Motor neuron (in vitro differentiated cells): ENCODE measurements at regions of chr13 and their contacts with region 1.

Region 1: GRCh38 chr13:20182231-20182846 is 10.4 kb downstream of the GJB2 start:
- ATAC-seq: peak; percentile 75 to 97 (median 92)
- H3K4me3 ChIP-seq: no peak overlapping the region
- H3K27ac ChIP-seq: no peak overlapping the region
- H3K4me1 ChIP-seq: no peaks in the 10 kb centered on the region

Region 2: DNA sequence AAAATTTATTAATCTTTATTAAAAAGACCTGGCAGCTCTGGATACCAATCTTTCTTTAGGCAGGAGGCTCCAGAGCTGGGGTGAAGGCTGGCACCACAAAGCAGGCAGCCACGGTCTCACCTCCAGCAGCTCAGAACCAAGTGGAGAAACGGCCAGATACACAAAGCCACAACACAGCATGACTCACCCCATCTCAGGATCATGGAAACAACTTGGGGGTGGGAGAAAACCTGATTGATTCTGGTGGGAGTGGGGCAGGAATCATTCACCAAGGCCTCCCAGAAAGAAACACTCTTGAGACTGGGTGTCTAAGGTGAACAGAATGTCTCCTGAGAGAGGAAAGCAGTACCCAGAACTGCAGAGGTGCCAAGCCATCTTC is 279.1 kb after region 1 on chr13:
- in situ Hi-C with region 1: loop called in 1 of 9 experiments (anchors 25 kb)
- ATAC-seq: no peak
- H3K4me3 ChIP-seq: no peak overlapping the region
- H3K27ac ChIP-seq: no peak overlapping the region
- H3K4me1 ChIP-seq: no peaks in the 10 kb centered on the region

Region 3: GRCh38 chr13:20495082-20496023 is 313.0 kb after region 1 on chr13:
- in situ Hi-C with region 1: loop called in 1 of 9 experiments (anchors 25 kb)
- ATAC-seq: peak in 7 of 8 experiments; percentile 43 to 86 (median 70)
- H3K4me3 ChIP-seq: no peak overlapping the region
- H3K27ac ChIP-seq: no peak overlapping the region
- H3K4me1 ChIP-seq: no peaks in the 10 kb centered on the region

Region 4: GRCh38 chr13:20924758-20925394 is 742.5 kb after region 1 on chr13:
- in situ Hi-C with region 1: loop called in 6 of 9 experiments (anchors 25 kb)
- ATAC-seq: peak; percentile 44 to 91 (median 66)
- H3K4me3 ChIP-seq: no peak overlapping the region
- H3K27ac ChIP-seq: no peak overlapping the region
- H3K4me1 ChIP-seq: no peaks in the 10 kb centered on the region